Calu3 (cell line): ENCODE measurements at regions of chr3 and their contacts with region 1.

Region 1: DNA sequence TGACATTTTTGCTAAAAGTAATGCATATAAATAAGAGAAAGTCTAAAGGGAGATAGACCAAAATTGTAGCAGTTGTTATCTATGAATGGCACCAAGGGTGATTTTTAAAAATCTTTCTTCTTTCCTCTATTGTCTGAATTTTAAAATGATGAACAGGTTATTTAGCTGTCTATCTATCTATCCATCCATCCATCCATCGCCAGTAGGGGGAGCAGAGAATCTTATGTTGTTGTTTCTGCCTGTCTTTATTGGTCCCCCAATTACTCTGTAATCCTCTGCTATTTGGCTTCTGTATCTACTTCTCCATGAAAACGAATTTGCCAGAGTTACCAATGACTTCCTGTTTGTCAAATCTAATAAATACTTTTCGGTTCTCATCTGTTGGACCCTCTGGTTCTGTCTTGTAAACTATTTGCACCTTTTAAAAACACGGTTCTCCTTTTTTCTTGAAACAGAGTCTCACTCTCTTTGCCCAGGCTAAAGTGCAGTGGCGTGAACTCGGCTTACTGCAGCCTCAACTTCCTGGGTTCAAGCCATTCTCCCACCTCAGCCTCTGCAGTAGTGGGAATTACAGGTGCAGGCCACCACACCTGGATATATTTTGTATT is 86.0 kb downstream of the ECT2 start:
- DNase-seq: peak; percentile 77
- H3K4me3 Mint-ChIP-seq: no peak overlapping the region
- H3K27ac Mint-ChIP-seq: no peak overlapping the region
- H3K4me1 Mint-ChIP-seq: no peaks in the 10 kb centered on the region
- H3K27me3 Mint-ChIP-seq: peaks cover 17% of the 10 kb centered on the region
- CTCF ChIP-seq: peak; percentile 84

Region 2: DNA sequence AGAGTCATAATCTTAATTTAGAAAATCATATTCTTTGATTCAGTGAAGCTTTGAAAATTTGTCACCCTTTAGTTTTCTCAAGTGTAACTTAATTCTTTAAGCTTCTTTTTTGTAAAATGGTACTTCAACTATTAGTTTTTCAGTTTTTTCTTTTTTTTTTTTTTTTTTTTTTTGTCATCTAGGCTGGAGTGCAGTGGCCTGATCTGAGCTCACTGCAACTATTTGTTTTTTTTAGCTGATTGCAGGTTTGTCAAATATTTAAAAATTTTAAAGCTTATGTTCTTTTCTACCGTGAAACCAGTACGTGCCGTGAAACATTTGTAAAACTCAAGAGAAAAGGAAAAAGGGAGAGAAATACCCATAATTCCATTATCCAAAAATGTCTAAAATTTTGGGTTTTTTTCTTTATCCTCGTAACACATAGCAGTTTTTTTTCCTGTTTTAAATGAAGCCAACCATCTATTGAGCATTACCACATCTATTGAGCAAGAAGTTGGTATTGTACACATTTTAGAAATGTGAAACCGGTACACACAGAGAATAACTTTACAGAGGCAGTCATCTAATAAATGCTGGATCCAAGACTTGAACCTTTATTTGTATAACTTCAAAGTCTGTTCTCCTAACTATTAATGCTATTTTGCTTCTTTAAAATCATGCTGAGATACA is 60.3 kb before region 1 on chr3:
- CTCF ChIA-PET with region 1: no interaction called
- intact Hi-C with region 1: no loop called
- DNase-seq: no peak
- H3K4me3 Mint-ChIP-seq: no peak overlapping the region
- H3K27ac Mint-ChIP-seq: no peak overlapping the region
- H3K4me1 Mint-ChIP-seq: peaks cover 6% of the 10 kb centered on the region
- H3K27me3 Mint-ChIP-seq: no peaks in the 10 kb centered on the region
- CTCF ChIP-seq: no peak

Region 3: GRCh38 chr3:172918165-172918564 is 81.7 kb after region 1 on chr3:
- CTCF ChIA-PET with region 1: no interaction called
- intact Hi-C with region 1: loop called (anchors 2 kb)
- DNase-seq: peak; percentile 56
- H3K4me3 Mint-ChIP-seq: peak overlapping the region; percentile 64
- H3K27ac Mint-ChIP-seq: peak overlapping the region; percentile 93
- H3K4me1 Mint-ChIP-seq: peaks cover 42% of the 10 kb centered on the region
- H3K27me3 Mint-ChIP-seq: no peaks in the 10 kb centered on the region
- CTCF ChIP-seq: no peak